A673 (cell line): ENCODE measurements at regions of chr2 and their contacts with region 1.

Region 1: GRCh38 chr2:111148925-111149324 is 28.2 kb downstream of the BCL2L11 start:
- DNase-seq: peak; percentile 28
- H3K4me3 ChIP-seq: no peak overlapping the region
- H3K27ac ChIP-seq: peak overlapping the region; percentile 44
- H3K4me1 ChIP-seq: peaks cover 16% of the 10 kb centered on the region
- H3K27me3 ChIP-seq: no peaks in the 10 kb centered on the region
- CTCF ChIP-seq: no peak

Region 2: GRCh38 chr2:111091811-111092211 is 57.1 kb before region 1 on chr2:
- CTCF ChIA-PET with region 1: no interaction called
- POLR2A ChIA-PET with region 1: no interaction called
- intact Hi-C with region 1: no loop called
- DNase-seq: no peak
- H3K4me3 ChIP-seq: no peak overlapping the region
- H3K27ac ChIP-seq: no peak overlapping the region
- H3K4me1 ChIP-seq: no peaks in the 10 kb centered on the region
- H3K27me3 ChIP-seq: peaks cover 13% of the 10 kb centered on the region
- CTCF ChIP-seq: no peak

Region 3: GRCh38 chr2:111244864-111245263 is 95.9 kb after region 1 on chr2:
- CTCF ChIA-PET with region 1: no interaction called
- POLR2A ChIA-PET with region 1: no interaction called
- intact Hi-C with region 1: loop called (anchors 5 kb)
- DNase-seq: no peak
- H3K4me3 ChIP-seq: no peak overlapping the region
- H3K27ac ChIP-seq: no peak overlapping the region
- H3K4me1 ChIP-seq: no peaks in the 10 kb centered on the region
- H3K27me3 ChIP-seq: no peaks in the 10 kb centered on the region
- CTCF ChIP-seq: no peak